ENCODE measurements at regions of chr4 and their contacts with region 1.

Region 1: GRCh38 chr4:43132010-43132582 is 239.6 kb downstream of the GRXCR1 start:
- DNase-seq: peak in 1 of 2 donors; percentile 50
- ATAC-seq: no peak

Region 2: DNA sequence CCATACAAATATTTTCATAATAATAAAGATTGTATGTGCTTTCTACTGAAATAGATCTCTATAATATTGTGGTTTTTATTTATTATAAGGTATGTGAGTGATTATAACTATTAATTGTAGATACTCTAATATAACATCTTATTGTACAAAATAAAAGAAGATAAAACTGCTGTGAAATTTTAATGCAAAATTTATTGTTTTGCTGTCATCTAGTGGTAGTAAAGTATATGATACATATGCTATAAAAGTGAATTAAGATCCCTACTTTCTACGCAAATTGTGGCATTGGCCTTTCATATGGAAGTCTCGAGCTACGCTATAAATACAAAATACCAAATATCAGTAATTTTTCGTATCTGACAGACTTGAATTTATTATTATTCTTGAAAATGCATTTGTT is 1500.0 kb after region 1 on chr4:
- intact Hi-C with region 1: loop called in 1 of 2 experiments (anchors 10 kb)
- DNase-seq: no peak
- ATAC-seq: no peak